MCF 10A (cell line): ENCODE measurements at regions of chr4 and their contacts with region 1.

Region 1: DNA sequence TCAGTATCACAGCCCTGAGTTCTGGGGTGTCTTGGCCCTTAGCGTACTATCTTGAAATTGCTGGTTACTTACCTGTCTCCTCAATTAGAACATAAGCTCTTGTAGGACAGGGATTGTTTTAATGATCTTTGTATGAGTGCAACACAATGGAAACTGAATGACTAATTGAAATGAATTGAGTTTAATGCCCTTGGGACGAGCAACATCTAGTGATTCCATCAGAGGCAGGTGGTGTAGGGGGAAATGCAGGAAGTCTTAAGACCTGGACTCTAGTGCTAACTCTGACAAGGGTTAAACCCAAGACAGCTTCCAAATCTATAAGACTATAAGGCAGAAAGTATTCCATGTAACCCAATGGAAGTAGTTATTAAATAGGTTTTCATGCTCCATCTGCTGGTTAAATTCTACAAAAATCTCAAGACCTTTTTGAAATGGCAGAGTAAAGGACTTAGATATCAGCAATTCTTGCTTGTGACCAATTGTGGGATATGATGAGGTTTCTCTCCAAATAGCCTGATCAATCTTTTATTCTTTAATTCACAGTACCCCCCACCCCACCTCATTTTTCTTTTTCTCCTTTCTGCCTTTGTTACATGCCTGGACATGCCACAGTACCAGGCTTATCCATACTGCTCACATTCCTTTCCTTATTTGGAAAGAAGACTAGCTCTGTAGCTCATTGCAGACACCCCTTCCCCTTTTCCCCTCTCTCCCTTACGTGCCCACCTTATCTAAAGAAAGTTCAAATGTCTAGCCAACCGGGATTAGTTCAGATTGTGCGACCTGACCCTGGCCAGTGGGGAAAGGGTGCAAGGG is 340.8 kb downstream of the PAPSS1 start:
- DNase-seq: peak; percentile 24
- H3K4me3 Mint-ChIP-seq: no peak overlapping the region
- H3K27ac Mint-ChIP-seq: peak overlapping the region; percentile 96
- H3K4me1 Mint-ChIP-seq: peaks cover 17% of the 10 kb centered on the region
- H3K27me3 Mint-ChIP-seq: no peaks in the 10 kb centered on the region
- CTCF ChIP-seq: peak; percentile 21

Region 2: GRCh38 chr4:107094332-107094731 is 284.9 kb before region 1 on chr4:
- CTCF ChIA-PET with region 1: interaction called, 4 read pairs
- POLR2A ChIA-PET with region 1: no interaction called
- intact Hi-C with region 1: loop called (anchors 1 kb)
- DNase-seq: peak; percentile 45
- H3K4me3 Mint-ChIP-seq: no peak overlapping the region
- H3K27ac Mint-ChIP-seq: no peak overlapping the region
- H3K4me1 Mint-ChIP-seq: no peaks in the 10 kb centered on the region
- H3K27me3 Mint-ChIP-seq: no peaks in the 10 kb centered on the region
- CTCF ChIP-seq: peak; percentile 58

Region 3: GRCh38 chr4:107757864-107758476 is 378.7 kb after region 1 on chr4:
- CTCF ChIA-PET with region 1: no interaction called
- POLR2A ChIA-PET with region 1: no interaction called
- intact Hi-C with region 1: no loop called
- DNase-seq: peak; percentile 36
- H3K4me3 Mint-ChIP-seq: no peak overlapping the region
- H3K27ac Mint-ChIP-seq: no peak overlapping the region
- H3K4me1 Mint-ChIP-seq: no peaks in the 10 kb centered on the region
- H3K27me3 Mint-ChIP-seq: no peaks in the 10 kb centered on the region
- CTCF ChIP-seq: peak; percentile 41